ENCODE measurements at regions of chr22 and their contacts with region 1.

Region 1: GRCh38 chr22:44710474-44711457 is 8.8 kb downstream of the PRR5 start:
- DNase-seq: no peak
- ATAC-seq: no peak
- H3K4me3 ChIP-seq: no peak overlapping the region
- H3K27ac ChIP-seq: no peak overlapping the region
- H3K4me1 ChIP-seq: no peaks in the 10 kb centered on the region
- H3K27me3 ChIP-seq: peaks cover 0 to 6% (median 0%) of the 10 kb centered on the region in 3 donors
- CTCF ChIP-seq: no peak

Region 2: DNA sequence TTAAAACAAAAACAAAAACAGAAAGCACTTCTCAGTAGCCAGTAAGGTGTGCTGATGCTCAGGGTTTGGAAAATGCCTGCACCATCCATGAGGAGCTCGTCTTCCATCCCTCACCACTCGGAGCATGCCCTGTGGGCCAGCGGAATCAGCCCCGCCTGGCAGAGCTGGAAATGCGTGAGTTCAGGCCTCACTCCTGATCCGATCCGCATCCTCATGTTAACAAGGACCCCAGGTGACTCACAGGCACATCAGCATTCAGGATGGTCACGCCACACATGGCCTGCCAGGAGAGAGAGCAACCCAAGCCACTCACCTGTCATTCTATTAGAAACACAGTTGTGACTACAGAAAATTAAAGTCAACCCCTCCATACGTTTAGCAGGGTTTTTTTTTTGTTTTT is 1110.5 kb before region 1 on chr22:
- intact Hi-C with region 1: loop called in 1 of 2 experiments (anchors 5 kb)
- DNase-seq: no peak
- ATAC-seq: no peak
- H3K4me3 ChIP-seq: no peak overlapping the region
- H3K27ac ChIP-seq: no peak overlapping the region
- H3K4me1 ChIP-seq: no peaks in the 10 kb centered on the region
- H3K27me3 ChIP-seq: no peaks in the 10 kb centered on the region
- CTCF ChIP-seq: no peak

Region 3: DNA sequence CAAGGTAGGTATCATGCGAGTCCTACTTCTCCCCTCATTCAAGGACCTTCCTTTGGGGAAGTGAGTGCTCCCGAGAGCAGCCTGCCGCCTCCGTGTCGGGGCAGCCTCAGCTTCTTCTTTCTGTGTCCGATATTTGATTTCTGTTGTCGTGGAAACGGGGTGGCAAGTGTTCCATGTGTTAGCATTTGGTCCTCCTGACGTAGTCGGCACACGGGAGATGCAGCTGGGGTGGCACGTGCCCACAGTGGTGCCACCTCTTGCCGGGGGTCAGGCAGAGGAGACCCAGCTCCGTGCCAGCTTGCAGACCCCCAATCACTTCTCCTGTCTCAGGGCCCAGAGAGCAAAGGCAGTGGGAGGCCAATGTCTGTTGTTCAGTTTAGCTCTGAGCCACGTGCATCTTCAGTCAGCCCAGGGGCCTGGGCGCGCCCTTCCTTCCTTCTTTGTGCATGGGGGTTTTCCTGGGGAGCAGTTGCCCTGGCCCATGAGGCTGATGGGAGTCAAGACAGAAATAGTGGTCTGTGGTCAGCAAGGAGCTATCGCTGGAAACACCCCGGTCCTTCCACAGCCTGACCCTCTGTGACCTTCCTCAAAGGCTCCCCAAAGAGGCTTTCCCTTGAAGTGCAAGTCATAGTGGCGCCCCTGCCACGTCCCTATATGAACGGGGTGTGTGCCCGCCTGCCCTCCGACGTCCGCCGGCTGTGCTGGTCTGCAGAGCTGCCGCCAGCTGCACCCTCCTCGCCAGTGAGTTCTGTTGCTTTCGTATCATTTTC is 642.2 kb before region 1 on chr22:
- intact Hi-C with region 1: no loop called
- DNase-seq: no peak
- ATAC-seq: peak; percentile 13 to 27 (median 20)
- H3K4me3 ChIP-seq: no peak overlapping the region
- H3K27ac ChIP-seq: peak overlapping the region; percentile 51
- H3K4me1 ChIP-seq: peaks cover 35% of the 10 kb centered on the region
- H3K27me3 ChIP-seq: no peaks in the 10 kb centered on the region
- CTCF ChIP-seq: no peak

Region 4: GRCh38 chr22:44735540-44736488 is 25.0 kb after region 1 on chr22:
- intact Hi-C with region 1: no loop called
- DNase-seq: peak; percentile 71 to 85
- ATAC-seq: peak; percentile 63 to 82 (median 66)
- H3K4me3 ChIP-seq: no peak overlapping the region
- H3K27ac ChIP-seq: no peak overlapping the region
- H3K4me1 ChIP-seq: no peaks in the 10 kb centered on the region
- H3K27me3 ChIP-seq: peaks cover 0 to 35% (median 3%) of the 10 kb centered on the region in 3 donors
- CTCF ChIP-seq: peak; percentile 95

Measured in psoas muscle (tissue), 8 donors.